HCT116 (cell line): ENCODE measurements at regions of chr18 and their contacts with region 1.

Region 1: GRCh38 chr18:4196345-4196744 is 258.8 kb downstream of the DLGAP1 start:
- DNase-seq: no peak
- ATAC-seq: no peak
- H3K4me3 ChIP-seq: no peak overlapping the region
- H3K27ac ChIP-seq: no peak overlapping the region
- H3K4me1 ChIP-seq: no peaks in the 10 kb centered on the region
- H3K27me3 ChIP-seq: no peaks in the 10 kb centered on the region
- CTCF ChIP-seq: no peak
- POLR2A ChIP-seq: no peak
- RAD21 ChIP-seq: no peak

Region 2: GRCh38 chr18:4130734-4131719 is 65.3 kb before region 1 on chr18:
- CTCF ChIA-PET with region 1: no interaction called
- POLR2A ChIA-PET with region 1: no interaction called
- RAD21 ChIA-PET with region 1: no interaction called
- intact Hi-C with region 1: loop called (anchors 10 kb)
- DNase-seq: no peak
- ATAC-seq: no peak; the same call in 1 of the 2 replicates
- H3K4me3 ChIP-seq: no peak overlapping the region
- H3K27ac ChIP-seq: no peak overlapping the region
- H3K4me1 ChIP-seq: no peaks in the 10 kb centered on the region
- H3K27me3 ChIP-seq: no peaks in the 10 kb centered on the region
- CTCF ChIP-seq: 0 out of 6 replicates have a peak, but pooled peaks of 1 of the 3 experiments have one; percentile 24
- POLR2A ChIP-seq: no peak
- RAD21 ChIP-seq: no peak